GM12878 (cell line): ENCODE measurements at regions of chr7 and their contacts with region 1.

Region 1: GRCh38 chr7:55309040-55309991 is 55.8 kb upstream of the LANCL2 start:
- DNase-seq: peak; percentile 99
- ATAC-seq: peak; percentile 89
- H3K4me3 ChIP-seq: no peak overlapping the region
- H3K27ac ChIP-seq: peak overlapping the region; percentile 74
- H3K4me1 ChIP-seq: peaks cover 52% of the 10 kb centered on the region
- H3K27me3 ChIP-seq: no peaks in the 10 kb centered on the region
- CTCF ChIP-seq: no peak
- EP300 ChIP-seq: peak; percentile 97 to 99
- POLR2A ChIP-seq: no peak; the same call in 1 of the 2 replicates
- RAD21 ChIP-seq: no peak

Region 2: GRCh38 chr7:55240418-55241142 is 68.7 kb before region 1 on chr7:
- CTCF ChIA-PET with region 1: no interaction called
- POLR2A ChIA-PET with region 1: no interaction called
- RAD21 ChIA-PET with region 1: no interaction called
- SMC1A ChIA-PET with region 1: no interaction called
- in situ Hi-C with region 1: no loop called
- intact Hi-C with region 1: no loop called
- DNase-seq: no peak
- ATAC-seq: no peak
- H3K4me3 ChIP-seq: no peak overlapping the region
- H3K27ac ChIP-seq: no peak overlapping the region
- H3K4me1 ChIP-seq: no peaks in the 10 kb centered on the region
- H3K27me3 ChIP-seq: peaks cover 2 to 9% of the 10 kb centered on the region in 2 experiments; a peak in 3 of 4 replicates
- CTCF ChIP-seq: no peak
- EP300 ChIP-seq: no peak
- POLR2A ChIP-seq: no peak
- RAD21 ChIP-seq: no peak

Region 3: DNA sequence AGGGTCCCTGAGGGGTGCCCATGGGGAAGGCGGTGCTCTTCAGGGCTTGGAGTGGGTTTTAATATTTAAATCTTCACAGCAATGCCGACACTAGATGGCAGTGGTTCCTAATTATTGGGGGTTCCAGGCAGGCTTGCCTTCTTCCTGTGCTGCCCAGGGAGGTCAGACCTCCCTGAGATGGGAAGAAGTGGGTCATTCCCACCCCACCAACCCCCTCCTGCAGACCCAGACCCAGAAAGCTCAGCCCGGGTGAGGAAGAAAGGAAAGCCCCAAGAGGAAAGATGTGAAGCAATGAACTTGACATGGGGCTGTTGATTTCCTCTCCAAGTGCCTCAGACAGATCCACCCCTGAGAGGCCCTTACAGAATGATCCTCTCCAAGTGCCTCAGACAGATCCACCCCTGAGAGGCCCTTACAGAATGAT is 29.3 kb before region 1 on chr7:
- CTCF ChIA-PET with region 1: interaction called, 74 read pairs
- POLR2A ChIA-PET with region 1: no interaction called
- RAD21 ChIA-PET with region 1: interaction called, 31 read pairs
- SMC1A ChIA-PET with region 1: interaction called, 68 read pairs
- in situ Hi-C with region 1: no loop called
- intact Hi-C with region 1: loop called (anchors 1 kb)
- DNase-seq: no peak
- ATAC-seq: peak; percentile 96
- H3K4me3 ChIP-seq: no peak overlapping the region
- H3K27ac ChIP-seq: no peak overlapping the region
- H3K4me1 ChIP-seq: no peaks in the 10 kb centered on the region
- H3K27me3 ChIP-seq: 0 out of 4 replicates have a peak, but pooled peaks cover 0 to 2% of the 10 kb centered on the region in 2 experiments
- CTCF ChIP-seq: peak; percentile 51 to 95 (median 68); a peak in 4 of 6 replicates
- EP300 ChIP-seq: no peak
- POLR2A ChIP-seq: no peak
- RAD21 ChIP-seq: peak; percentile 97

Region 4: DNA sequence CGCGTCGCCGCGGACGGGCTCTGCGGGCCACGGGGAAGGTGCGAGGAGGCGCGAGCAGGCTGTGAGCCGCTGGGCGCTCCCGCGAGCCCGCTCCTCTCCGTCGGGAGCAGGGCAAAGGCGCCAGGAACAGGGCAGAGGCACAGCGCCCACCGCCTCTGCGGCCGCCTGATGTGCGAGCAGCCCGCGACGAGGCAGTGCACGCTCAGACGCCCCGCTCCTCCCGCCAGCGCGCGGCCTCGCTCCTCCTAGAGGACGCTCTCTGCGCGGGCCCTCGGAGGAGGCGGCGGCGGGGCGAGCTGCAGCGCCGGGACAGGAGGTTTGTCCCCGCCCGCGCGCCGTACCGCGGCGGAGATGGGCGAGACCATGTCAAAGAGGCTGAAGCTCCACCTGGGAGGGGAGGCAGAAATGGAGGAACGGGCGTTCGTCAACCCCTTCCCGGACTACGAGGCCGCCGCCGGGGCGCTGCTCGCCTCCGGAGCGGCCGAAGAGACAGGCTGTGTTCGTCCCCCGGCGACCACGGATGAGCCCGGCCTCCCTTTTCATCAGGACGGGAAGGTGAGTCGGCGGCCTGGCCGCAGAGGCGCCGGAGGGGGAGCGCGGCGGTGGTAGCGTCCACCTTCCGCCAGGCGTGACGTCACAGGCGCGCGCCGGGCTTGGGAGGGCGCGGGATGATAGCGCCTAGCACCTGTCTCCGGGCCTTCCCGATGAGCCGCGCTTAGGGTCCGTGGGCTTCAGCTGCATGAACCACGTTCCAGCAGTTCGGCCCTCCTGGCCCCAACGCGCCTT is 56.6 kb after region 1 on chr7:
- CTCF ChIA-PET with region 1: interaction called, 9 read pairs
- POLR2A ChIA-PET with region 1: interaction called, 10 read pairs
- RAD21 ChIA-PET with region 1: interaction called, 33 read pairs
- SMC1A ChIA-PET with region 1: interaction called, 12 read pairs
- in situ Hi-C with region 1: no loop called
- intact Hi-C with region 1: loop called (anchors 1 kb)
- DNase-seq: peak; percentile 79
- ATAC-seq: peak; percentile 90
- H3K4me3 ChIP-seq: peak overlapping the region; percentile 99
- H3K27ac ChIP-seq: peak overlapping the region; percentile 91
- H3K4me1 ChIP-seq: peaks cover 9% of the 10 kb centered on the region
- H3K27me3 ChIP-seq: no peaks in the 10 kb centered on the region
- CTCF ChIP-seq: peak in 2 of 3 experiments; percentile 30 to 32; a peak in 3 of 6 replicates
- EP300 ChIP-seq: peak in 1 of 2 experiments; percentile 22; a peak in 1 of 4 replicates
- POLR2A ChIP-seq: peak; percentile 93
- RAD21 ChIP-seq: peak; percentile 31; the same call in 1 of the 2 replicates

Region 5: GRCh38 chr7:55415173-55415778 is 106.0 kb after region 1 on chr7:
- CTCF ChIA-PET with region 1: interaction called, 13 read pairs
- POLR2A ChIA-PET with region 1: interaction called, 4 read pairs
- RAD21 ChIA-PET with region 1: interaction called, 6 read pairs
- SMC1A ChIA-PET with region 1: interaction called, 13 read pairs
- in situ Hi-C with region 1: no loop called
- intact Hi-C with region 1: no loop called
- DNase-seq: peak; percentile 25
- ATAC-seq: peak; percentile 99
- H3K4me3 ChIP-seq: no peak overlapping the region
- H3K27ac ChIP-seq: no peak overlapping the region
- H3K4me1 ChIP-seq: no peaks in the 10 kb centered on the region
- H3K27me3 ChIP-seq: no peaks in the 10 kb centered on the region
- CTCF ChIP-seq: peak; percentile 64 to 76 (median 65)
- EP300 ChIP-seq: no peak
- POLR2A ChIP-seq: no peak
- RAD21 ChIP-seq: peak; percentile 85

Region 6: GRCh38 chr7:55432939-55433784 is 123.8 kb after region 1 on chr7:
- CTCF ChIA-PET with region 1: no interaction called
- POLR2A ChIA-PET with region 1: no interaction called
- RAD21 ChIA-PET with region 1: no interaction called
- SMC1A ChIA-PET with region 1: no interaction called
- in situ Hi-C with region 1: no loop called
- intact Hi-C with region 1: no loop called
- DNase-seq: no peak
- ATAC-seq: peak; percentile 85
- H3K4me3 ChIP-seq: no peak overlapping the region
- H3K27ac ChIP-seq: no peak overlapping the region
- H3K4me1 ChIP-seq: no peaks in the 10 kb centered on the region
- H3K27me3 ChIP-seq: no peaks in the 10 kb centered on the region
- CTCF ChIP-seq: peak; percentile 58 to 74 (median 61); a peak in 5 of 6 replicates
- EP300 ChIP-seq: no peak
- POLR2A ChIP-seq: no peak
- RAD21 ChIP-seq: peak; percentile 71

Region 7: DNA sequence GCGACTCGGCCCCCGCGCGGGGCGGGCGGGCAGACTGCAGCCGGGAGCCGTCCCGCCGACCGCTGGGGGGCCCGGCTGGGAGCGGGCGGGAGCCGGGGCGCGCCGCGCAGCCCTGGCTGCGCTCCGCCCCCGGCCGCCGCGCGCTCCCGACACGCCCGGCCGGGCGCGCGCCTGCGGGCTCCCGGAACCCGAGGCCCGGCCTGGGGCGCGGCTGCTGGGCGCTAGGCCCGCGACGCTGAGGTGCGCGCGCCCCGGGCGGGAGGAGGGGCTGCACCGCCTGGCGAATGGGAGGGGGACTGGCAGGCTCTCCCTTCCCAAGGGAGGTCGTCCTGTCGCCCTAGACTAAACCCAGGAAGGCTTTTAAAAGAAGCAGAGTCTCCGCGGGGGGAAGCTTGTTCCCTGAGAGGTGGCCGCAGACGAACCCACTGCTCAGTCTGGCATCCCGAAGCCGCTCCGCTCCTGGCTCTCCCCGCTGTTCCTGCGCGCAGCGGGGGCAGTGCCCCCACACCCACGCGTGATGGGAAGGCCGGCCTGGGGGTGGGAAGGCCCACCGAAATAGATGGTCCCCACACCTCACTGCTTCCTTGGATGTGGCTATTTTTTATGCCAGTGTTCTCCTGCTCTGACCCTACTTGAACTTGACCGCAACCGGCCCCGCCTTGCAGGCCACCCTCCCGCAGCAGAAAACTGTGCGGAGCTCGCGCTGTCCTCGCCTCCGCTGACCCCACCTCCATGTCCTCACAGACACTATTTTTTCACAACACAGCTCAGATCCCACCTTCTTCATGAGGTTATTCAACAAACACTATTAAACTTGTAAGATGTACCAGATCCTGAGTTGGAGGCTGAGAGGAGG is 263.3 kb after region 1 on chr7 and contains the start of gene VOPP1:
- CTCF ChIA-PET with region 1: interaction called, 3 read pairs
- POLR2A ChIA-PET with region 1: no interaction called
- RAD21 ChIA-PET with region 1: interaction called, 13 read pairs
- SMC1A ChIA-PET with region 1: interaction called, 13 read pairs
- in situ Hi-C with region 1: no loop called
- intact Hi-C with region 1: no loop called
- DNase-seq: no peak
- ATAC-seq: peak; percentile 20
- H3K4me3 ChIP-seq: peak within 1 kb of the TSS; percentile 98
- H3K27ac ChIP-seq: peak within 1 kb of the TSS; percentile 93
- H3K4me1 ChIP-seq: peaks cover 22% of the 10 kb centered on the region
- H3K27me3 ChIP-seq: no peaks in the 10 kb centered on the region
- CTCF ChIP-seq: no peak
- EP300 ChIP-seq: no peak
- POLR2A ChIP-seq: peak; percentile 63
- RAD21 ChIP-seq: no peak
- polyA plus RNA-seq, gene VOPP1: 32.8 to 78.5 TPM